ENCODE measurements at regions of chr1 and their contacts with region 1.

Region 1: DNA sequence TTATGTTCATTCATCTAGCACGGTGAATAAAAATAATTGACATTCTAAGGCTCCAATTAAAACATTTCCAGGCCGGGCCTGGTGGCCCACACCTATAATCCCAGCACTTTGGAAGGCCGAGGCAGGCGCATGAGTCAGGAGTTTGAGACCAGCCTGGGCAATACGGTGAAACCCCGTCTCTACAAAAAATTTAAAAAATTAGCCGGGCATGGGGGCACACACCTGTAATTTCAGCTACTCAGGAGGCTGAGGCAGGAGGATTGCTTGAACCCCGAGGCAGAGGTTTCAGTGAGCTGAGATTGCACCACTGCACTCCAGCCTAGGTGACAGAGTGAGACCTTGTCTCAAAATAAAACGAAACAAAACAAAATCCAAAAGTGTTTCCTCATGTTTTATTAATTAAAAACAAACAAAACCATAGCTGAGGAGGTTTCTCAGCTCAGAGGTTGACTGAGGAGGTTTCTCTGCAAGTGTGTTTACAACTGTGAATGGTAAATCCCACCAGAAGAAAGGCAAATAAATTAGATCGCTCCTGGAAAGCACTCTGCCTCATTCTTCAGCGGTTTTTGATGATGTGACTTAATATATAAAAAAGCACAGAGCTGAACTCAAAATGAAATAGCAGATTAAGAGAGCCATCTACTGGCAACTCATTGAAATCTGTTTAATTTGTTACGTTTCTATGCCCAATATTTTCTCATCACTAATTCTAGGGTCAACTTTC is 37.7 kb upstream of the ATG4C start:
- DNase-seq: peak; percentile 77
- H3K4me3 ChIP-seq: peak overlapping the region; percentile 24
- H3K27ac ChIP-seq: no peak overlapping the region
- H3K4me1 ChIP-seq: no peaks in the 10 kb centered on the region
- H3K27me3 ChIP-seq: no peaks in the 10 kb centered on the region
- CTCF ChIP-seq: peak; percentile 76

Region 2: GRCh38 chr1:62175568-62176179 is 570.6 kb before region 1 on chr1:
- CTCF ChIA-PET with region 1: interaction called, 7 read pairs
- POLR2A ChIA-PET with region 1: no interaction called
- intact Hi-C with region 1: loop called (anchors 5 kb)
- DNase-seq: peak; percentile 71
- H3K4me3 ChIP-seq: no peak overlapping the region
- H3K27ac ChIP-seq: no peak overlapping the region
- H3K4me1 ChIP-seq: no peaks in the 10 kb centered on the region
- H3K27me3 ChIP-seq: no peaks in the 10 kb centered on the region
- CTCF ChIP-seq: peak; percentile 81

Region 3: DNA sequence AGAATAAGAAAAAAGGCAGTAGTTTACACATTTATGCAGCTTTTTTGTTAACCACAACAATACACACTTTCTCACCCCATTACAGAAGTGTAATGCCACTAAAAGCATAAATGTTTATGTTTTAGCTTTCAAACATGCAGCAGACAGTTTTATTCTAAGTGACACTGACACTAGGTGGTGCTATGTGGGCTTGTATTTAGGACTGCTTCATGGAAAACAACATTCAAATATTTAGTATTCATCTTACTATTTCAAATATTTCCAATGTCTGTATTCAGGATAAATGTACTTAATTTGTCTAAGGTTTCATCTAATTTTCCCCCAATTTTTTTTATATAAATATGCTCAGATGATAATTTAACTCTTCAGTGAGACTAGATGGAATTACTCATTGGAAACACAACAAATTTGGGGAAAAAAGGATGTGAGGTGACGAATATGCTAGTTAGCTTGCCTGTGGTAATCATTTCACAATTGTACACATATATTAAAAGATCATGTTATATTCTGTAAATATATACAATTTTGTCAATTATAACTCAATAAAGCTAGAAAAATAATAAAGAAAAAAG is 238.0 kb before region 1 on chr1:
- CTCF ChIA-PET with region 1: interaction called, 15 read pairs
- POLR2A ChIA-PET with region 1: no interaction called
- intact Hi-C with region 1: loop called (anchors 1 kb)
- DNase-seq: peak; percentile 61
- H3K4me3 ChIP-seq: no peak overlapping the region
- H3K27ac ChIP-seq: no peak overlapping the region
- H3K4me1 ChIP-seq: no peaks in the 10 kb centered on the region
- H3K27me3 ChIP-seq: no peaks in the 10 kb centered on the region
- CTCF ChIP-seq: peak; percentile 77

Region 4: GRCh38 chr1:62530516-62531154 is 215.6 kb before region 1 on chr1:
- CTCF ChIA-PET with region 1: interaction called, 10 read pairs
- POLR2A ChIA-PET with region 1: no interaction called
- intact Hi-C with region 1: loop called (anchors 1 kb)
- DNase-seq: peak; percentile 37
- H3K4me3 ChIP-seq: no peak overlapping the region
- H3K27ac ChIP-seq: no peak overlapping the region
- H3K4me1 ChIP-seq: no peaks in the 10 kb centered on the region
- H3K27me3 ChIP-seq: no peaks in the 10 kb centered on the region
- CTCF ChIP-seq: peak; percentile 60

Measured in A673 (cell line).